IMR-90 (cell line): ENCODE measurements at regions of chr1 and their contacts with region 1.

Region 1: DNA sequence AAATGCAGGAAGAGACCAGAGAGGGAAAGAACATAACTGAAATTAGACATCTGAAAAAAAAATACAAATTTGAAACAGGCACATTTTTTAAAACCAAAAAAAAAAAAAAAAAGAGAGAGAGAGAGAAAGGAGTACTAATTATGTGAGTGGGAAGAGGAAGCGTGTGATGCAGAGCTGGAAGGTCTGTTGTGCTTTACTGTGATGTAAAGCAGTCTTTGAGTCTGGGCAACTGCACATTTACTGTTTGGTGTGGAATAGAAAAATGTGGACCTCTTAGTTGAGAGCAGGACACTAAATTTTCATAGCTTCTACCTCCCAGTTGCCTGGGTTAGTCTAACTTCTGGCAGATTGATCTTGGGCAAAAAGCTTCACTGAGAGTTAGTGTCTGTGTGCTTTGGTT is 16.5 kb downstream of the LHX9 start:
- DNase-seq: no peak
- ATAC-seq: no peak
- H3K4me3 ChIP-seq: no peak overlapping the region
- H3K27ac ChIP-seq: no peak overlapping the region
- H3K4me1 ChIP-seq: no peaks in the 10 kb centered on the region
- H3K27me3 ChIP-seq: peaks cover 2% of the 10 kb centered on the region; the same call in 1 of the 2 replicates
- CTCF ChIP-seq: no peak
- POLR2A ChIP-seq: no peak
- RAD21 ChIP-seq: no peak

Region 2: GRCh38 chr1:198102454-198102827 is 168.8 kb after region 1 on chr1:
- CTCF ChIA-PET with region 1: no interaction called
- POLR2A ChIA-PET with region 1: interaction called, 13 read pairs
- dilution Hi-C with region 1: no loop called
- in situ Hi-C with region 1: no loop called
- intact Hi-C with region 1: no loop called
- DNase-seq: peak; percentile 70
- ATAC-seq: peak; percentile 82
- H3K4me3 ChIP-seq: peak overlapping the region; percentile 29; the same call in 1 of the 2 replicates
- H3K27ac ChIP-seq: no peak overlapping the region
- H3K4me1 ChIP-seq: peaks cover 9% of the 10 kb centered on the region
- H3K27me3 ChIP-seq: no peaks in the 10 kb centered on the region
- CTCF ChIP-seq: no peak
- POLR2A ChIP-seq: no peak
- RAD21 ChIP-seq: no peak